IMR-90 (cell line): ENCODE measurements at regions of chr12 and their contacts with region 1.

Region 1: DNA sequence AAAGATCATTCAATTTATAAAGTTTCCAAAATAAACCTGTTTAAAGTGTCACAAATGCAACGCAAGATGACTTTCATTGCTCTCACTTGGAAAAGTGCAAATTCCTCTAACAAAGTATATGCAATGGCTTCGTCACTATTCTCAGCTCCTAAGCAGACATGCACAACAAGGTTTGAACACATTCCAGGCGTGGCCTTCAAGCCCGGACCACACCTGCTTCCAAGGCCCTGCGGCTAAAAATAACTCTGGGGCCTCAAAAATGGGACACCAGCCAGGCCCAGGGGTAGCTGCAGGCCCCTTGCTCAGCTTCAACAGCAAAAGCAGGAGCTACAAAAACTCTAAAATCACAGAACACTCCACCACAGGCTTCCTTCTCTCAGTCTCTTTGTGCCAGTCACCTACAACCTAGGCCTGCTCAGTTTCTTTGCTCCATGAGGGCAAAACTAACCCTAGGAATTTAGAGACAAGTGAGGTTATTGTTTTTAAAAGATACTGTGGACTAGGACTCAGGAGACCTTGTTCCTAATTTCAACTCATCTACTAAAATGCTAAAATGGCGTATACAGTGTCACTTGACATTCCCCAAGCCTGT is 29.3 kb downstream of the DUSP16 start:
- DNase-seq: no peak
- ATAC-seq: no peak
- H3K4me3 ChIP-seq: no peak overlapping the region
- H3K27ac ChIP-seq: no peak overlapping the region
- H3K4me1 ChIP-seq: peaks cover 4% of the 10 kb centered on the region; the same call in 1 of the 2 replicates
- H3K27me3 ChIP-seq: no peaks in the 10 kb centered on the region
- CTCF ChIP-seq: no peak
- POLR2A ChIP-seq: no peak
- RAD21 ChIP-seq: no peak

Region 2: DNA sequence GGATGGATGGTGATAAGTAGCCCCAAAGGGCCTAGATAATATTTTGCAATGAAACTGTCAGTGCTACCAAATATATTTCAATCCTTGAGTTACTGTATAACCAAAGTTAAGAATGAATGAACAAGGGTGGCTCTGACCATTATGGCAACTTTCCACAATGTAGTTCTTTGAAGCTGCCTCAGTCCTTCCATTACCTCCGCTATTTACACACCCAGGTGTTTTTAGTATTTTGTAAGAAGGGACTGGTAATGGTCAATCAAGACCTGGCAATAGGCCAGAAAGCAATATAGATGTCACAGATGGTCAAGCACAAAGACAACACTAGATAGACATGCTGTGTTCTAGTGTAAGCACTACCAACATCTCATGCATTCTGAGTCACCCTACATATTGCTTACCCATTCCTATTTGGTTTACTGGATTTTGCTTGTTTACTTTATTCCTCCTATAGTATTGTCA is 13.0 kb after region 1 on chr12:
- CTCF ChIA-PET with region 1: no interaction called
- POLR2A ChIA-PET with region 1: no interaction called
- dilution Hi-C with region 1: no loop called
- in situ Hi-C with region 1: no loop called
- intact Hi-C with region 1: loop called (anchors 1 kb)
- DNase-seq: peak; percentile 51
- ATAC-seq: peak; percentile 70
- H3K4me3 ChIP-seq: no peak overlapping the region
- H3K27ac ChIP-seq: no peak overlapping the region
- H3K4me1 ChIP-seq: peaks cover 2% of the 10 kb centered on the region; the same call in 1 of the 2 replicates
- H3K27me3 ChIP-seq: no peaks in the 10 kb centered on the region
- CTCF ChIP-seq: no peak
- POLR2A ChIP-seq: no peak
- RAD21 ChIP-seq: no peak